Ovary (tissue), 10 donors: ENCODE measurements at regions of chr4 and their contacts with region 1.

Region 1: DNA sequence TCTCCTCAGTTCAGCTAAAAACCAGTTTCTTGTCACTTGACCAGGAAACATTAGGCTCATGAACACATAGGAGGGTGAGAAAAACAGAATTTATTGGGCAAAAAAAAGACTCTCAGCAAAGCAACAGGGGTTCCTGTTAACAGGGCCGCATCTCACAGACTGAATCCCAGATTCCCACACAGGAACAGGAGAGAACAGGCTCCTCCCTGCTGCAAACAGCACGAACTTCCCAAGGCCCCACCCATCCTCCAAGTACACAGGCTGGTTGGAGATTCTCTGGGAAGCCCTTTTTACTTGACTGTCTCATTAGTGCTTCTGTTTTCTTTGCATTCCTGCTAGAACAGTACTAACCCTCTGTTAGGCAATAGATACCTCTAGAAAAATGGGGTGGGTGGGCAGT is 52.4 kb upstream of the IL21 start:
- DNase-seq: no peak
- H3K4me3 ChIP-seq: no peak overlapping the region
- H3K27ac ChIP-seq: no peak overlapping the region
- H3K4me1 ChIP-seq: no peaks in the 10 kb centered on the region
- H3K27me3 ChIP-seq: no peaks in the 10 kb centered on the region
- CTCF ChIP-seq: no peak
- EP300 ChIP-seq: no peak
- POLR2A ChIP-seq: no peak

Region 2: DNA sequence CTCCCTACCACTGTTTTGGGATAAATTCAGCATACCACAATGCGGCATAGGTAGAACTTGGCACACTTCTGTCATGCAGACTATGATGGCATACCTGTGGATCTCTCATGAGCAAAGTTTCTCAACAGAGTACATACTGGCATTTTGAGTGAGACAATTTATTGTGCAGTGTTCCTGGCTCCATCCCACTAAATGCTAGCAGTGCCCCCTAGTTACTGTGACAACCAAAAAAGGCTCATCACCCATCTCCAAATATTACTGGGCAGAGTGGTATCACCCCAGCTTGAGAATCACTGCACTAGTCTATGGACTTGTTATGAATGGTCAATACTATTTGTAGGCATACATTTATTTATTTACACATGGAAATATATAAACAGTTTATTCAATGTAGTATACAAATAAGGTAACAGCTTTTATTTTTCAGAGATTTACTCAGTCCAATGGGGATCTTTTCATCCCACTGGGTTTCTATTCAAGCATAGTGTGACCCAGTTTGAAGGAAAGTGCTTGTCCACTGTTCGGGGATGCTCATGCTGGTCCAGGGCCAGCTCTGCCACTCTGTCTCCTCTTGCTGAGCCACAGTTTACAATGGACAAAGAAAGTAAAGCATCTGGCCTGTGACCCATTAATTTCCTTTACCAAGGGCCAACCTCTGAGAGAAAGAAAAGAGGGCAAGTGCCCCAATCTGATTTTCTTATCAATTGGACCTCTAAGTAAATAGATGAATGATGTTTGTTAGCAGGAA is 135.7 kb before region 1 on chr4:
- intact Hi-C with region 1: no loop called
- DNase-seq: no peak
- H3K4me3 ChIP-seq: no peak overlapping the region
- H3K27ac ChIP-seq: no peak overlapping the region
- H3K4me1 ChIP-seq: no peaks in the 10 kb centered on the region
- H3K27me3 ChIP-seq: no peaks in the 10 kb centered on the region
- CTCF ChIP-seq: no peak
- EP300 ChIP-seq: no peak
- POLR2A ChIP-seq: no peak

Region 3: DNA sequence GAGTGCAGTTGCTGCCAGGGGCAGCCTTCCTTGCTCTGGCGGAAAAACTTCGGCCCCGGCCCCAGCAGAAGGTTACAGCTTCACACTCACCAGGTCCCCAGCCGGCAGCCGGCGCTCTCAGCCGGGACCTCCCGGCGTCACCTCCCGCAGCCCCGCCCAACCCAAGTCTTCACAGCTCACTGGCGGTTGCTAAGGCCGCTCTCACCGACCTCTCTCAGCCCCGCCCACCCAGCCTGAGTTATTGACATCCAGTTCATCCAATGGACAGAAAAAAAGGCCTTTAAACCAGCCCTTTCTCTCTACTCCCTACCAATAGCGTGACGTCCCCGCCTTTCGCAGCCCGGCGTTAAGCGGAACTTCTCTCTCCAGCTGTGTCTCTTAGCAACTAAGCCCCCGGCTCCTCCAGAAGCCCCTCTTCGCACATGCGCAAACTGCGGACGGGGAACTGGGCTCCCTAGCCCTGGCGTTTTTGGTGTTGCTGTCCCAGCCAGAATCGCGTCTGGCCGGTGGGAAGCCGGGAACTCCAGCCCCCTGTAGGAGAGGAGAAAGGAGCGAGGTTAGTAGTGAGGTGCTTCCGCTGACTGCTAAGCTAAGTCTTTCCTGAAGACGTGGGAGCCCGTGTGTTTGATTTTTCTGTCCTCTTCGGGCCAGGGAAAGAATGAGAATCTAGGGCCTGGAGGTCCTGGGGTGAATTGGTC is 59.2 kb after region 1 on chr4 and contains the start of gene BBS12:
- intact Hi-C with region 1: loop called in 1 of 4 experiments (anchors 10 kb)
- DNase-seq: peak; percentile 98 to 99 (median 98)
- H3K4me3 ChIP-seq: peak within 1 kb of the TSS; percentile 81
- H3K27ac ChIP-seq: peak within 1 kb of the TSS in 1 of 2 donors; percentile 67
- H3K4me1 ChIP-seq: peaks cover 2% of the 10 kb centered on the region
- H3K27me3 ChIP-seq: no peaks in the 10 kb centered on the region
- CTCF ChIP-seq: peak in 1 of 3 donors; percentile 24
- EP300 ChIP-seq: no peak
- POLR2A ChIP-seq: peak; percentile 26
- total RNA-seq, gene BBS12: 3.1 to 6.8 (median 3.8) TPM